ENCODE measurements at regions of chr15 and their contacts with region 1.

Region 1: GRCh38 chr15:90375071-90375470 is 13.0 kb upstream of the IQGAP1 start:
- DNase-seq: no peak
- H3K4me3 ChIP-seq: no peak overlapping the region
- H3K27ac ChIP-seq: no peak overlapping the region
- H3K4me1 ChIP-seq: no peaks in the 10 kb centered on the region
- H3K27me3 ChIP-seq: no peaks in the 10 kb centered on the region
- CTCF ChIP-seq: no peak
- EP300 ChIP-seq: no peak
- POLR2A ChIP-seq: no peak
- RAD21 ChIP-seq: no peak

Region 2: DNA sequence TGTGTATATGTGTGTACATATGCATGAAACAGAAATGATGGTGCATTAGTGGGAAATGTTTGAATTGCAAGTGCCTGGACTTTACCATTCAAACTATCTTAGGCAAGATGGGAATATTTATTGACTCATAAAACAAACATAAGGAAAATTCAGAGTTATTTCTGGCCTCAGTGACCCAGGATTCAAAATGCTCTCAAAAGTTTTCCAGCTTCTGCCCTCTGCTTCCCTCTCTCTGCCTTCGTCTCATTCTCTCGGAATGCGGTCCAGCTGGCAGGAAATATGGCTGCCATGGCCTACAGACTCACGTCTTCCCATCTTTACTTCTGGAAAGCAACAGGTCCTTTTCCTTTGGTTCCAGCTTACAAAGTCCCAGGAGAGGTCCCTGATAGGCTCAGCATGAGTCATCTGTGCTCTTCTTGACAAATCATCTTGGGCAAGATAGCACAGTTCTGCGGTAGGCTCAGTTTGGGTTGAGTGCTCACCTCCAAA is 31.7 kb before region 1 on chr15:
- CTCF ChIA-PET with region 1: no interaction called
- POLR2A ChIA-PET with region 1: no interaction called
- DNase-seq: no peak
- H3K4me3 ChIP-seq: no peak overlapping the region
- H3K27ac ChIP-seq: no peak overlapping the region
- H3K4me1 ChIP-seq: no peaks in the 10 kb centered on the region
- H3K27me3 ChIP-seq: no peaks in the 10 kb centered on the region
- CTCF ChIP-seq: no peak
- EP300 ChIP-seq: no peak
- POLR2A ChIP-seq: no peak
- RAD21 ChIP-seq: no peak

Region 3: GRCh38 chr15:90362936-90363212 is 12.2 kb before region 1 on chr15:
- CTCF ChIA-PET with region 1: interaction called, 16 read pairs
- POLR2A ChIA-PET with region 1: no interaction called
- DNase-seq: no peak
- H3K4me3 ChIP-seq: no peak overlapping the region
- H3K27ac ChIP-seq: no peak overlapping the region
- H3K4me1 ChIP-seq: no peaks in the 10 kb centered on the region
- H3K27me3 ChIP-seq: 0 out of 7 replicates have a peak, but pooled peaks cover 0 to 3% (median 0%) of the 10 kb centered on the region in 4 experiments
- CTCF ChIP-seq: no peak
- EP300 ChIP-seq: no peak
- POLR2A ChIP-seq: no peak
- RAD21 ChIP-seq: no peak